ENCODE measurements at regions of chr9 and their contacts with region 1.

Region 1: GRCh38 chr9:77944556-77945243 is 86.9 kb downstream of the GNAQ start:
- DNase-seq: no peak
- H3K4me3 ChIP-seq: no peak overlapping the region
- H3K27ac ChIP-seq: no peak overlapping the region
- H3K4me1 ChIP-seq: peaks cover 4 to 7% (median 5%) of the 10 kb centered on the region in 4 experiments; a peak in 5 of 7 replicates
- H3K27me3 ChIP-seq: no peaks in the 10 kb centered on the region
- CTCF ChIP-seq: peak in 2 of 3 experiments; percentile 25 to 31; a peak in 2 of 4 replicates
- EP300 ChIP-seq: no peak
- POLR2A ChIP-seq: no peak
- RAD21 ChIP-seq: peak; percentile 30 to 49; a peak in 3 of 4 replicates

Region 2: DNA sequence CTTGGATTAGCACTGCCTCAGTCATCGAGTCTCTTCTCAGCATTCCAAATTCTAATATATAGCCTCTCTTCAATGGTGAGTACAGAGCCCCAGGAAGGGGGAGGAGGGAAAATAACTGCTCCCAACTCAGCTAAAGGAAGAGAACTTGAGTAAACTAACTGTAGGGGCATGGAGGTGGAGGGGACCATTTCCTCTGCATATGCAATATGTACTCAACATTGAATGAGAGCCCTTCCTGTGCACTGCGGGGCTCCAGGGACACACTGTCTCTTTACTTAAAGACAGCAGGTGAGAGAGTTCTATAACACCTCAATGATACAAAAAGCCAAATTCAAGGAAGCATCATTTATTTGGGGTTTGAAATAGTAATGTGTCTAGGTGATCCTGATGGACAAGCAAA is 11.9 kb after region 1 on chr9:
- CTCF ChIA-PET with region 1: interaction called, 11 read pairs
- POLR2A ChIA-PET with region 1: interaction called, 6 read pairs
- DNase-seq: no peak
- H3K4me3 ChIP-seq: no peak overlapping the region
- H3K27ac ChIP-seq: no peak overlapping the region
- H3K4me1 ChIP-seq: peaks cover 2 to 30% (median 17%) of the 10 kb centered on the region in 4 experiments
- H3K27me3 ChIP-seq: no peaks in the 10 kb centered on the region
- CTCF ChIP-seq: no peak
- EP300 ChIP-seq: no peak
- POLR2A ChIP-seq: no peak
- RAD21 ChIP-seq: no peak

Measured in H1 (cell line).